CD4-positive, alpha-beta memory T cell (primary cell): ENCODE measurements at regions of chr12 and their contacts with region 1.

Region 1: GRCh38 chr12:69330475-69331473 is 17.4 kb upstream of the LYZ start:
- DNase-seq: peak; percentile 72 to 79 (median 74)
- H3K4me3 ChIP-seq: peak overlapping the region; percentile 49 to 95
- H3K4me3 Mint-ChIP-seq: peak overlapping the region; percentile 94 to 99 (median 96)
- H3K27ac ChIP-seq: peak overlapping the region; percentile 72
- H3K27ac Mint-ChIP-seq: peak overlapping the region; percentile 81 to 99 (median 96)
- H3K4me1 ChIP-seq: peaks cover 60% of the 10 kb centered on the region
- H3K4me1 Mint-ChIP-seq: peaks cover 36 to 64% (median 52%) of the 10 kb centered on the region in 4 donors
- H3K27me3 ChIP-seq: no peaks in the 10 kb centered on the region
- H3K27me3 Mint-ChIP-seq: no peaks in the 10 kb centered on the region

Region 2: GRCh38 chr12:69239352-69239921 is 91.3 kb before region 1 on chr12 and contains the start of gene CPSF6:
- CTCF ChIA-PET with region 1: interaction called, 3 read pairs
- POLR2A ChIA-PET with region 1: interaction called, 31 read pairs
- intact Hi-C with region 1: loop called (anchors 2 kb)
- DNase-seq: peak; percentile 95 to 96 (median 95)
- H3K4me3 ChIP-seq: peak within 1 kb of the TSS; percentile 60 to 94
- H3K4me3 Mint-ChIP-seq: peak within 1 kb of the TSS; percentile 96 to 100 (median 98)
- H3K27ac ChIP-seq: peak within 1 kb of the TSS; percentile 89
- H3K27ac Mint-ChIP-seq: peak within 1 kb of the TSS; percentile 98 to 100 (median 99)
- H3K4me1 ChIP-seq: peaks cover 52% of the 10 kb centered on the region
- H3K4me1 Mint-ChIP-seq: peaks cover 36 to 57% (median 47%) of the 10 kb centered on the region in 4 donors
- H3K27me3 ChIP-seq: no peaks in the 10 kb centered on the region
- H3K27me3 Mint-ChIP-seq: no peaks in the 10 kb centered on the region
- total RNA-seq, gene CPSF6: 109 to 120 TPM

Region 3: DNA sequence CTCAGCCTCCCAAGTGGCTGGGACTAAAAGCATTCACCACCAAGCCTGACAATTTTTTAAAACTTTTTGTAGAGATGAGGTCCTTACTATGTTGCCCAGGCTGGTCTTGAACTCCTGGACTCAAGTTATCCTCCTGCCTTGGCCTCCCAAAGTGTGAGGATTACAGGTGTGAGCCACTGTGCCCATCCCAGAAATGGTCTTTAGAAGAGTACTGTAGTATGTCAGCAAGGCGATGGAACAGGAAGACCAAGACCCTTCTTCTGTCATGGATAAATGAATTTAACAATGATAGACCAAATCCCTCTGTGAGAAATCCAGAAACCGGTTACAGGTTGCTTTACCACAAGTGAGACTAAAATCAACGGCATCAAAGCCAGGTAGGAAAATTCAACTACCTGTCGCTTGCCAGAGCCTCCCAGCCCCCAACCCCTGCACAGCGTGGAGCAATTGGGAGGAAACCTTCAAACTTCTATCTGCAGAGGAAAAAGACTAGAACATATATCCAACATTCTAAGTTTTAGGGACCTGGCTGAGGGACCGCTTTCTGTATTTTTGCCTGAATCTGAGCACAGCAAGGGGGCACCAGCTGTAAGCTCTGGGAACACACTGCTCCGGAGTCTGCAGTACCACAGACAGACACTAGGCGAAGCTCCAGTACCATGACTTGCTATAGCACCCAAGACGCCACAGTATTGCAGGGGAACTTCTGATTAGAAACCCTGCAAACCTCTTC is 40.1 kb before region 1 on chr12:
- CTCF ChIA-PET with region 1: interaction called, 22 read pairs
- POLR2A ChIA-PET with region 1: interaction called, 9 read pairs
- intact Hi-C with region 1: loop called (anchors 1 kb)
- DNase-seq: peak; percentile 72 to 76 (median 74)
- H3K4me3 ChIP-seq: no peak overlapping the region
- H3K4me3 Mint-ChIP-seq: peak overlapping the region in 1 of 8 donors; percentile 30
- H3K27ac ChIP-seq: no peak overlapping the region
- H3K27ac Mint-ChIP-seq: peak overlapping the region in 1 of 7 donors; percentile 49
- H3K4me1 ChIP-seq: no peaks in the 10 kb centered on the region
- H3K4me1 Mint-ChIP-seq: peaks cover 6 to 9% (median 7%) of the 10 kb centered on the region in 4 donors
- H3K27me3 ChIP-seq: peaks cover 5% of the 10 kb centered on the region
- H3K27me3 Mint-ChIP-seq: peaks cover 25 to 29% of the 10 kb centered on the region in 2 donors

Region 4: DNA sequence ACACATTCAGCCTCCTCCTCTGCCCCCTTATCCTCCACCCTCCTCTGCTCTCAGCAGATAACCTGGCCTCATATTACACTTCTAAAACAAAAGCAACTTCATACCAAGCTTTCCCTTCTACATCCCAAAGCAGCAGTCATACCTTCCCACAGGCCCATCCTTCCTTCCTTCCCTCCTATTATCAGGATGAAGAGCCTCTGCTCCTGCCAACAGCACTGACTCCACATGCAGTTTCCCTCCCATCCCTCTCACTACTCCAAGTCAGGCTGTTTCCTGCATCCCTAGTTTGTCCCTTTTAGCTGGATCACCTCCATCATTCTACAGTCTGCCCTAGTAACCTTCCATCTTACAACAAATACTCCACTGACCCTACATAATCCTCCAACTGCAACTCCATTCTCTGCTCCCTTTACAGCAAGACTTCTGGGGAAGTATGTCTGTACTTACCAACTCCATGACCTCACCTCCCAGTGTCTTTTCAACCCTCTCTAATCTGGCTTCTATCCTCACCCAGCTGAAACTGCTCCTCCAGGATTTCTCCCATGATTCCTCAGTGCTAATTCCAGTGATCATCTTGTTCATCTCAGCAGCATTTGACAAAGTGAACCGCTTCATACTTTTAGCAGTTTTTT is 23.9 kb after region 1 on chr12:
- CTCF ChIA-PET with region 1: interaction called, 82 read pairs
- POLR2A ChIA-PET with region 1: interaction called, 73 read pairs
- intact Hi-C with region 1: loop called (anchors 1 kb)
- DNase-seq: no peak
- H3K4me3 ChIP-seq: no peak overlapping the region
- H3K4me3 Mint-ChIP-seq: no peak overlapping the region
- H3K27ac ChIP-seq: no peak overlapping the region
- H3K27ac Mint-ChIP-seq: peak overlapping the region in 1 of 7 donors; percentile 15
- H3K4me1 ChIP-seq: peaks cover 6% of the 10 kb centered on the region
- H3K4me1 Mint-ChIP-seq: peaks cover 13 to 16% (median 15%) of the 10 kb centered on the region in 4 donors
- H3K27me3 ChIP-seq: no peaks in the 10 kb centered on the region
- H3K27me3 Mint-ChIP-seq: peaks cover 4 to 8% of the 10 kb centered on the region in 2 donors

Region 5: DNA sequence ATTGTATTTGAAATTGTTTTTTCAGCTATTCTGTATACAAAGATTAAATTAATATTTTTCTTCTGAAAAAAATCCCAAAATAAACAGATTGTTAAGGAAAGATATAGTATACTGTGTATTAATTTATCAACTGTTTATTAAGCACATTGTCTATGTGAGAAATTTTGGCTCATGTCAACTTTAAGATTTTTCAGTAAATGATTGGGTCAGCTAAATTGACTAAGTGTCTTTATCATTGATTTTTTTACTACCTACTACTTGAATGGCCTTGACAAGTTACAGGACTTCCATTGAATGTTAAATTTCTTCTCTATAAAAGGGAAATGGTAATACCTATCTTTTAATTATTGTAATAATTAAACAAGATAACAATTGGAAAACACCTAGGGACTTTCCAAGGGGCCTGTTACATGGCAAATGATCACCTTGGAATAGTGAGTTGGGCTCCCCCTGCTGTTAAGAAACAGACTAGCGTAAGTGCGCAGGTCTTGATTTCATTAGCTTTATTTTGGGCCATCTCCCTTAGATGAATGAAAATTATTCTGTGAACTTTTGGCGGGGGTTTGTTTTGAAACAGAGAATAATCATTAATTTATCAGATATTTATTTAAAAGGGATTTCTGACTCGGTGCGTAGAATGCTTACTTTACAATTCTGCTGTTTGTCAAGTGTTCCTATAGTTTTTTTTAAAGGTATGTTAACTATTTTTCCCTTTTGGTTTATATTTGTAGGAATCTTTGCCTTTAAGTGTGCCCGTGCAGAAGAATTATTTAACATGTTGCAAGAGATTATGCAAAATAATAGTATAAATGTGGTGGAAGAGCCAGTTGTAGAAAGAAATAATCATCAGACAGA is 240.0 kb after region 1 on chr12:
- CTCF ChIA-PET with region 1: interaction called, 12 read pairs
- POLR2A ChIA-PET with region 1: interaction called, 7 read pairs
- intact Hi-C with region 1: no loop called
- DNase-seq: peak; percentile 59 to 76 (median 66)
- H3K4me3 ChIP-seq: no peak overlapping the region
- H3K4me3 Mint-ChIP-seq: no peak overlapping the region
- H3K27ac ChIP-seq: peak overlapping the region; percentile 39
- H3K27ac Mint-ChIP-seq: peak overlapping the region in 5 of 7 donors; percentile 24 to 71 (median 50)
- H3K4me1 ChIP-seq: no peaks in the 10 kb centered on the region
- H3K4me1 Mint-ChIP-seq: peaks cover 0 to 4% (median 2%) of the 10 kb centered on the region in 4 donors
- H3K27me3 ChIP-seq: no peaks in the 10 kb centered on the region
- H3K27me3 Mint-ChIP-seq: no peaks in the 10 kb centered on the region